ENCODE measurements at regions of chr20 and their contacts with region 1.

Region 1: DNA sequence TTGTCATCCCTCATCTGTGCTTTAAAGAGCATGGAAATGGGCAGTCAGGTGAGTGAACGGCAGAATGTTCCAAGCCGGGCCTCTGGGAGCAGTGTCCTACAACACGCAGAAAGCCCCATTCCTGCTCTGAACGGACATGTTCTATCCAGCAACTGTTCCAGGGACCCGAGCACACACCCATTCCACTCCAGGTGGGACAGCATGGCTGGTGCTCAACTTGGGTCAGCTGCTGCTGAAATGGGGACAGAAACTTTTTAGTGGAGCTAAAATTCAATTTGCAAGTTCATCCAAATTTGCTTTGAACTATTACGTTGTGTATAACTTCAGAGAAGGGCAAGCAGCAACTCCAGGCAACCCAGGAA is 26.6 kb downstream of the DIDO1 start:
- DNase-seq: peak in 1 of 3 donors; percentile 55
- ATAC-seq: peak; percentile 55 to 60
- H3K4me3 ChIP-seq: no peak overlapping the region
- H3K27ac ChIP-seq: no peak overlapping the region
- H3K4me1 ChIP-seq: no peaks in the 10 kb centered on the region
- H3K27me3 ChIP-seq: no peaks in the 10 kb centered on the region

Region 2: DNA sequence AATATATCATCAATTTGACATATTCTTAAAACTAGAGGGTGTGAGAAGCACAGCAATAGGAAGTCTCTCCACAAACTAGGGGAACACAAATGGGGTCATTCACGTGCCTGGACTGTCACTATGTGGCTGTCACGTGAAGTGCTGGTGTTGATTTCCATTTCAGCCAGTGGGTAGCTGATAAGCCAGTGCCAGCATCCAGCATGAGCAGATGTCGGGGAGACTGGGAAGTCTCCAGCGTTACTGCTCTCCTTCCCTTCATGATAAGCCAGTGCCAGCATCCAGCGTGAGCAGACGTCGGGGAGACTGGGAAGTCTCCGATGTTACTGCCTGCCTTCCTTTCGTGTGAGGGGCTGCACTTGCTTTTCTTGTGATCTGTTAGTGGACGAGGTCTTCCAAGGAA is 47.2 kb after region 1 on chr20:
- intact Hi-C with region 1: loop called in 1 of 4 experiments (anchors 10 kb)
- DNase-seq: peak; percentile 69 to 84 (median 81)
- ATAC-seq: peak; percentile 83 to 87
- H3K4me3 ChIP-seq: no peak overlapping the region
- H3K27ac ChIP-seq: no peak overlapping the region
- H3K4me1 ChIP-seq: peaks cover 2% of the 10 kb centered on the region
- H3K27me3 ChIP-seq: no peaks in the 10 kb centered on the region

Region 3: DNA sequence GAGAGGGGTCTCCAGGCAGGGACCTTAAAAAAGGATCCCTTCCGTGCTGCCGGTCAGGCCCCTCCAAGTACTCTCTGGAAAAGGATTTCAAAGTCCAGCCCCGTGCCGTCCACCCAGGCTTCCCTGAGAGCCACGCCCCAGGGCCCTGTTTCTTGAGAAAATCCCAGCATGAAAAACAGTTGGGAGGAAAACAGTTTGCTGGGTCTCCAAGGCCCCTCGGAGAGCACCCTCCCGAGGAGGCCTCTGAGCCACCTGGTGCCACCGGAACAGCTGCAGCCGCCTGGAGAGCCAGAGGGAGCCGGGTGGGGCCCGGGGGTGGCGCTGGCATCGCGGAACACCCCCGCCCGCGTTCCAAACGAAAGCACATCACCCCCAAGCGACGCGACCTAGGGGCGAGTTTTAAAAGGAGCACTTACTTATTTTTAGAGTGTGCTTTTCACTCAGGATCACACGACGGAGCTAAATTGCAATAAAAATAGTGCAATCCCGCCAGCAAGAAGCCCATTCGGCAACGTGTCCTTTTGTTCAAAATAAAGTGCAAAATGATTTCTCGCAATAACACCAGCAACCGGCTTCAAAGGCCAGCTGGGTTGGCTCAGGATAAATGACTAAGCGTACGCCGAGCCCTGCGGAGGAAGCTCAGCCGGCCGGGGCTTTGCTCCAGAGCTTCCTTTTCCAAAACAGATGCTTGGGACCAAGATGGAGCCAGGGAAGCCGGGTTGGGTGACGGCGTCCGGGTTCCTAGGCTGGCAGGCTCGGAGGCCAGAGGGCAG is 252.1 kb after region 1 on chr20:
- intact Hi-C with region 1: no loop called
- DNase-seq: peak in 2 of 3 donors; percentile 7 to 47
- ATAC-seq: no peak
- H3K4me3 ChIP-seq: no peak overlapping the region
- H3K27ac ChIP-seq: no peak overlapping the region
- H3K4me1 ChIP-seq: no peaks in the 10 kb centered on the region
- H3K27me3 ChIP-seq: no peaks in the 10 kb centered on the region

Measured in right cardiac atrium (tissue), 5 donors.